Naive thymus-derived CD4-positive, alpha-beta T cell (primary cell): ENCODE measurements at regions of chr1 and their contacts with region 1.

Region 1: DNA sequence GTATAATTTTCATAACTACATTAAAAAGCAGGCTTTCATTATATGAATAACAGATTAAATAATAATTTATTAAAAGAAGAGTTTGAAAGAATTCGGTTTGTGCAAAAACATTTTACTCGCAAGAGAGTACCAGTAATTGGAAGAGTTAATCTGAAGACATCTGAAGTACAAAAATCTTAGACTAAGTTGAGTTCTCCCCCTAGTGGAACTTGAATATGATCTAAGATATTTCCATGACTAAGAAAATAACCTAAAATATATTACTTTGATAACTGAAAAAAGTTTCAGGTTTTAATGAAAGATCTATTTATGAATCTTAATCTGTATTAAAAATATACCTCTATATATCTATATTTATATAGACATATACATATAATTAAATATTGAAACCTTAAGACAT is 112.5 kb upstream of the GFI1 start:
- DNase-seq: peak in 6 of 9 donors; percentile 19 to 61 (median 48)
- ATAC-seq: peak; percentile 59
- H3K4me3 ChIP-seq: no peak overlapping the region
- H3K4me3 Mint-ChIP-seq: no peak overlapping the region
- H3K27ac ChIP-seq: no peak overlapping the region
- H3K27ac Mint-ChIP-seq: no peak overlapping the region
- H3K4me1 ChIP-seq: no peaks in the 10 kb centered on the region
- H3K4me1 Mint-ChIP-seq: peaks cover 4 to 30% (median 9%) of the 10 kb centered on the region in 7 donors
- H3K27me3 ChIP-seq: no peaks in the 10 kb centered on the region
- H3K27me3 Mint-ChIP-seq: no peaks in the 10 kb centered on the region

Region 2: GRCh38 chr1:92461364-92462097 is 137.7 kb before region 1 on chr1:
- CTCF ChIA-PET with region 1: interaction called, 3 read pairs
- POLR2A ChIA-PET with region 1: no interaction called
- intact Hi-C with region 1: loop called in 1 of 2 experiments (anchors 1 kb)
- DNase-seq: no peak
- ATAC-seq: peak; percentile 18
- H3K4me3 ChIP-seq: no peak overlapping the region
- H3K4me3 Mint-ChIP-seq: peak overlapping the region in 3 of 10 donors; percentile 8 to 49 (median 32)
- H3K27ac ChIP-seq: no peak overlapping the region
- H3K27ac Mint-ChIP-seq: peak overlapping the region in 1 of 9 donors; percentile 68
- H3K4me1 ChIP-seq: peaks cover 23 to 27% of the 10 kb centered on the region in 2 donors
- H3K4me1 Mint-ChIP-seq: peaks cover 30 to 63% (median 57%) of the 10 kb centered on the region in 7 donors
- H3K27me3 ChIP-seq: no peaks in the 10 kb centered on the region
- H3K27me3 Mint-ChIP-seq: no peaks in the 10 kb centered on the region

Region 3: GRCh38 chr1:92583821-92584760 is 15.1 kb before region 1 on chr1:
- CTCF ChIA-PET with region 1: interaction called, 5 read pairs
- POLR2A ChIA-PET with region 1: interaction called, 8 read pairs
- intact Hi-C with region 1: loop called in 1 of 2 experiments (anchors 1 kb)
- DNase-seq: peak in 7 of 9 donors; percentile 50 to 82 (median 76)
- ATAC-seq: peak; percentile 93
- H3K4me3 ChIP-seq: peak overlapping the region; percentile 30
- H3K4me3 Mint-ChIP-seq: peak overlapping the region; percentile 25 to 88 (median 68)
- H3K27ac ChIP-seq: peak overlapping the region; percentile 47
- H3K27ac Mint-ChIP-seq: peak overlapping the region; percentile 41 to 93 (median 86)
- H3K4me1 ChIP-seq: peaks cover 27 to 38% of the 10 kb centered on the region in 2 donors
- H3K4me1 Mint-ChIP-seq: peaks cover 22 to 66% (median 63%) of the 10 kb centered on the region in 7 donors
- H3K27me3 ChIP-seq: no peaks in the 10 kb centered on the region
- H3K27me3 Mint-ChIP-seq: no peaks in the 10 kb centered on the region

Region 4: GRCh38 chr1:92623187-92623778 is 24.1 kb after region 1 on chr1:
- CTCF ChIA-PET with region 1: interaction called, 3 read pairs
- POLR2A ChIA-PET with region 1: no interaction called
- intact Hi-C with region 1: loop called in 1 of 2 experiments (anchors 1 kb)
- DNase-seq: peak in 6 of 9 donors; percentile 4 to 42 (median 35)
- ATAC-seq: peak; percentile 49
- H3K4me3 ChIP-seq: no peak overlapping the region
- H3K4me3 Mint-ChIP-seq: no peak overlapping the region
- H3K27ac ChIP-seq: no peak overlapping the region
- H3K27ac Mint-ChIP-seq: no peak overlapping the region
- H3K4me1 ChIP-seq: no peaks in the 10 kb centered on the region
- H3K4me1 Mint-ChIP-seq: no peaks in the 10 kb centered on the region
- H3K27me3 ChIP-seq: no peaks in the 10 kb centered on the region
- H3K27me3 Mint-ChIP-seq: peaks cover 0 to 4% (median 0%) of the 10 kb centered on the region in 5 donors